Astrocyte of the cerebellum (primary cell): ENCODE measurements at regions of chr10 and their contacts with region 1.

Region 1: DNA sequence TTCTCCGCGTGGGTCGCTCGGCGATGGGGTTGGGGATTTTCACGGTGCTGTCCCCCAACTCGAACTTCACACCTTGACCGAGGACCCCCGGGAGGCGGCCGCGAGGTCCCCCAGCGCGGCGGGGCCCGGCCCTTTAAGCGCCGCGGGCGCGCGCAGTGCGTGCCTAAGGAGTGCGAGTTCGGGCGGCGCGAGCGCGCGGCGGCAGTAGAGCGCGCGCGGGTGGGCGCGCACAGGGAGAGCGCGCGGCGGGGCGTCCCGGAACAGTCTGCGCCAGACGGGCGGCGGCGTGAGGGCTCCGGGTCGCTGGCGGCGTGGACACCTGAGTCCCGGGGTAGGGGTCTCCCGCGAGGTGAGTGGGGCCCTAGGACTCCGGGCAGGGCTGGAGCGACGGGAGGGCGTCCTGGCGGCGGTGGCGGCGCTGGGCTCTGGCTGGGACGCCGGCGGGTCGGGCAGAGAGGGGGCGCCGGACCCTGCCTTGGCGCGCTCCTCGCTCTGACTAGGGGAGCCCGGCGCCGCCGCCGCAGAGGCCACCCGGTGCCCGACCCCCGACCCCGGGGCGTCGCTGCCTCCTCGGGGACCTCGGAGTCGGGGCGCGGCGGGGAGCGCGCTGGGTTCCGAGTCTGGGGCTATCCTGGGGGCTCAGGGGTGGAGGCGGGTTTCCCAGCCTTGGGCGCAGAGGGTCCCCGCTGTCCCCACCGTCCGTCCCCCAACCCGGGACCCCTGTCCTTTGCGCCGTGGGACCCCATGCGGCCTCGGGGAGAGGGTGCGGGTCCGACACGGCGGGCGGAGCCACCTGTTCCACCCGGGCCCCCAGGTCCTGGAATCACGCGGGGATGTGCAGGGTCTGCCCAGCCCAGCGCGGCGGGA is at the start of gene PROSER2:
- DNase-seq: no peak
- H3K4me3 ChIP-seq: peak within 1 kb of the TSS; percentile 65
- CTCF ChIP-seq: no peak

Region 2: DNA sequence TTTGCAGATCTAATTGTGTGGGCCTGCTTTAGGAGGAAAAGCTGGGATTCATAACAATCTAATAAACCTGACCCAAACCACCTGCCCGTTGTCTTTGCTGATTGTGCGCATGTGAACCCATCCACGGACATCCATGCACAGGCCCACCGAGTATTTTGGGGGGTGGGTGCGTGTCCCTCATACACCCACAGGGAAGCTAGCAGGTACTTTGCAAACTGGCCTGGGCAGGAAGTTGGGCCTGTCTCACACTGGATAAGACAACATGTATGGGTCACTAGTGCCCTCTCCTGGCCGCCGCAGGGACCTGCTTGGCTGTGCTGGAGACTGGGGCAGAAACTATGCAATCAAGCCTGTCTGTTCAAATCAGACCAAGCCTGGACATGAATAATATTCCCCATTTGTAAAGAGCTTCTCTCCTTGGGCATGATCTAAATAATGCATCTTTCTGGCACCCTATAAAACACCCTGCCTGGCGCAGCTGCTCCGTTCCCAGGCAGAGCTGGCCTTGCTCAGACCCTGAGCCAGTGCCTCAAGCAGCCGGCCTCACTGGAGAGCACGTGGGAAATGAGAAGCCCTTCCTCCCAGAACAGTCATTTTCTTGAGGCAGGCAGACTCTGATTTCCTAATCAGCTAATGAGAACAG is 65.4 kb before region 1 on chr10:
- in situ Hi-C with region 1: no loop called
- DNase-seq: peak; percentile 62
- H3K4me3 ChIP-seq: no peak overlapping the region
- CTCF ChIP-seq: peak; percentile 89

Region 3: GRCh38 chr10:11782793-11783557 is 40.4 kb before region 1 on chr10:
- in situ Hi-C with region 1: loop called (anchors 5 kb)
- DNase-seq: peak; percentile 49
- H3K4me3 ChIP-seq: no peak overlapping the region
- CTCF ChIP-seq: peak; percentile 61

Region 4: DNA sequence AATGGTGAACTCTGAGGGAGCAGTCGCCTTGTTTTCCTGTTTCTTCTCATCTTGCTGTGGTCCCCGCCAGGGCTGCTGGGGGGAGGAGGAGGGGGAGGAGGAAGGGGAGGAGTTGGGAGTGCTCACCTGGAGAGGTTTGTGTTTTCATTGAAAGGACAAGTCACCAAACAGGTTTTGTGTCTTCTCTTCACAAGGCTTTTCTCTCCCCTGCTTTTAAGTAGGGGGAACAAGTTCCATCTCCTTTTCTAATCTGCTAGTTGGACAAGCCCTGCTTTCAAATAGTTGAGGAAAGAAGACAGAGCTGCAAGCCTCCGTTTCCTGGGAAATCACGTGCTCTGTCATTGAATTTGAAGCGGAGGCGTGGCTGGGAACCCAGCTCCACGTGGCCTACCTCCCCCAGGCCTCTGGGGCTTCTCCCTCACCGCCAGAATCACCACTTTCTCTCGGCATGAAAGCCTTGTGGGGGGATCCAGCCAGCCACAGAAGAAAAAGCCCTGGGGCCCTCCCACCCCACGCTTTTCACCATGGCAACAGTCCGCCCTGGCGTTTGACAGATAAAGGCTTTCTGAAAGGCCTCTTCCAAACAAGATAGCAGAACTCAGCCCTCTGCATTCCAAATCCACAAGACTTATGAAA is 51.3 kb after region 1 on chr10:
- in situ Hi-C with region 1: loop called (anchors 5 kb)
- DNase-seq: no peak
- H3K4me3 ChIP-seq: no peak overlapping the region
- CTCF ChIP-seq: no peak

Region 5: DNA sequence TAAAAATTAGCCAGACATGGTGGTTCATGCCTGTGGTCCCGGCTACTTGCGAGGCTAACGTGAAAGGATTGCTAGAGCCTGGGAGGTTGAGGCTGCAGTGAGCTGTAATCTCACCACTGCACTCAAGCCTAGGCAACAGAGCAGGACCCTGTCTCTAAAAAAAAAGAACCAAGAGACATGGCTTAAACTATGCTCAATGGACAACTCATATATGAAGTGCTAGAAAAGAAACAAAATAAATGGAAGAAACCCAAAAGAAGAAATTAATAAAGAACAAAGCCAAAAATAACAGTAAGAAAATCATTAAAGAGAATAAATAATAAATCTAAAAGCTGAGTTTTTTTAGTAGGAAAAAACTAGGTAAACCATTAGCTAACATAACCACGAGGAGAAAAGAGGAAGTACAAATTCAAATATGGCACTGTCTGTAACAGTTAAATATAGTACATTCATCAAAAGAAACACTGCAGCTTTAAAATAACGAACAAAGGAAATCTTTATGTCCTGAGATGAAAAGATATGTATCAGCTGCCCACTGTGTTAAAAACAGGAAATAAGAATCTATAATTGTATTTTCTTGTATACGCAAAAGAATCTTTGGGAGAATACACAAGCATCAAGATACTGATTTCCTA is 170.6 kb after region 1 on chr10:
- in situ Hi-C with region 1: no loop called
- DNase-seq: no peak
- H3K4me3 ChIP-seq: no peak overlapping the region
- CTCF ChIP-seq: no peak